A673 (cell line): ENCODE measurements at regions of chr2 and their contacts with region 1.

Region 1: GRCh38 chr2:44291281-44292248 is 16.3 kb downstream of the SLC3A1 start:
- DNase-seq: peak; percentile 77
- H3K4me3 ChIP-seq: no peak overlapping the region
- H3K27ac ChIP-seq: no peak overlapping the region
- H3K4me1 ChIP-seq: peaks cover 21% of the 10 kb centered on the region
- H3K27me3 ChIP-seq: no peaks in the 10 kb centered on the region
- CTCF ChIP-seq: peak; percentile 64

Region 2: GRCh38 chr2:43507137-43507536 is 784.4 kb before region 1 on chr2:
- CTCF ChIA-PET with region 1: no interaction called
- POLR2A ChIA-PET with region 1: no interaction called
- intact Hi-C with region 1: no loop called
- DNase-seq: no peak
- H3K4me3 ChIP-seq: no peak overlapping the region
- H3K27ac ChIP-seq: no peak overlapping the region
- H3K4me1 ChIP-seq: no peaks in the 10 kb centered on the region
- H3K27me3 ChIP-seq: no peaks in the 10 kb centered on the region
- CTCF ChIP-seq: no peak

Region 3: GRCh38 chr2:43877782-43878464 is 413.6 kb before region 1 on chr2:
- CTCF ChIA-PET with region 1: interaction called, 3 read pairs
- POLR2A ChIA-PET with region 1: no interaction called
- intact Hi-C with region 1: loop called (anchors 5 kb)
- DNase-seq: peak; percentile 74
- H3K4me3 ChIP-seq: no peak overlapping the region
- H3K27ac ChIP-seq: no peak overlapping the region
- H3K4me1 ChIP-seq: peaks cover 4% of the 10 kb centered on the region
- H3K27me3 ChIP-seq: no peaks in the 10 kb centered on the region
- CTCF ChIP-seq: peak; percentile 98

Region 4: GRCh38 chr2:44044281-44044720 is 247.3 kb before region 1 on chr2:
- CTCF ChIA-PET with region 1: interaction called, 3 read pairs
- POLR2A ChIA-PET with region 1: no interaction called
- intact Hi-C with region 1: loop called (anchors 1 kb)
- DNase-seq: peak; percentile 93
- H3K4me3 ChIP-seq: no peak overlapping the region
- H3K27ac ChIP-seq: no peak overlapping the region
- H3K4me1 ChIP-seq: no peaks in the 10 kb centered on the region
- H3K27me3 ChIP-seq: no peaks in the 10 kb centered on the region
- CTCF ChIP-seq: peak; percentile 90

Region 5: DNA sequence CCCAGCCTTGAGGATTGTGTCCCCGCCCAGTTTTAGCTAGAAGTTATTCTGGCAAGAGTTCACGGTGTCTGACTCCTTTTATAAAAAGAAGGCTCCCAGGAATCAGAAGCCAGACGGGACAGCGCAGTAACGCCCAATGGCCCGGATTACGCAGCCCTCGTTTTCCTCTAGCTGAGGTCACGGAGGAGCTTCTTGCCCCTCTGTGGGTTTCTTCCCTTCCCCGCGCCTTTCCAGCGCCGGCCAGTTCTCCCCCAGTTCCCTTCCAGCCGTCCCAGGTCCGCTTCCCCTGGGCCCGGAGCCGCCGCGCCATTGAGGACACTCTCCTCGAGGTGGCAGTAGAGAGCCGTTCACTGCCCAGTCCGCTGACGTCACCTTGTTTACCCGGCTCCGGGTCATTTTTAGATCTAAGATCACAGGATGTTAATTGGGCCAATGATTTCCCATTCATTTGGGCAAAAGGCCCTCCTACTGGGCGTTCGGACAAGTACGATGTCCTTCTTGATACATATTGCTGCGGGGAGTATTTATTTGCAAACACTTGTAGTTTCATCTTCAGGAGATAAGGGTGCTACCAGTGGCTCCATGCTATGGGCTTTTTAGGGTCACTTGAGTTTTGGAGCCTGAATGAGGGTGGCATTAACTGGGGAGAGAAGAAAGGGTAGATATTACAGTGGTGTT is 204.4 kb before region 1 on chr2:
- CTCF ChIA-PET with region 1: no interaction called
- POLR2A ChIA-PET with region 1: no interaction called
- intact Hi-C with region 1: loop called (anchors 1 kb)
- DNase-seq: peak; percentile 75
- H3K4me3 ChIP-seq: peak overlapping the region; percentile 41
- H3K27ac ChIP-seq: no peak overlapping the region
- H3K4me1 ChIP-seq: no peaks in the 10 kb centered on the region
- H3K27me3 ChIP-seq: no peaks in the 10 kb centered on the region
- CTCF ChIP-seq: peak; percentile 96